ENCODE measurements at regions of chr12 and their contacts with region 1.

Region 1: DNA sequence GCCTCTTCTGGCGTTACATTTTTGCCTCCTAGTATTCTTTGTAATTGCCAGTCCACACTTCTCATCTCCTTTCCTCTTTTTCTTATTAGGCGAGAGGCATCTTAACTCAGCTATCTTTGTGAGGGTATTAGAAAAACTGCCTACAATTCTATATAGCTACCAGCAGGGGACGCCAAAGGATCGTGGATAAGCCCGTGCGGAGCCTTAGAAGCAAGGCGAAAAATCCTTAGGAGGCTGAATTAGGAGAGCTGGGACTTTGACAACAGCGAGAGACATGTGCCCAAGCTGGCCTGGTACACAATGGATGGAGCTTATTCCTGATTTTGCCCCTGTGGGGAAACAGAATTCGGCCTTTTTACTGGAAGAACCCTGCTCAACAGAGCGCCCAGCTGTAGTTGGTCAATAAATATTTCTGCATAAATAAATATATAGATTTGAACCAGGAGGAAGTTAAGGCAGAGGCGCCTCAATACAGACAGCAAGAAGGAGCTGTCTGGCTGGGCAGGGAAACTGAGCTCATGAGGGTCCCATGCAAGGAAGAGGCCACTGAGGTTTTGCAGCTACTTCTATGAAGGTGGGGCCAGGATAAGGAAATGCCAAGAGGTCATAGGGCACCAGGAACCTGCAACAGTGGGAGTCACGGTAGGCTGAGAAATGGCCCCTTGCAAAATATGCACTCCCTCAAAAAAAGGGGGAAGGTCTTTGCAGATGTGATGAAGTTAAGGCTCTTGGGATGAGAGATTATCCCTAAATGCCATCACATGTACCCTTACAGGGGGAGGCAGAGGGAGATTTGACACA is 14.6 kb upstream of the RBM19 start:
- DNase-seq: no peak
- ATAC-seq: no peak
- H3K4me3 Mint-ChIP-seq: no peak overlapping the region
- H3K27ac Mint-ChIP-seq: no peak overlapping the region
- H3K4me1 Mint-ChIP-seq: no peaks in the 10 kb centered on the region
- H3K27me3 Mint-ChIP-seq: peaks cover 3% of the 10 kb centered on the region

Region 2: DNA sequence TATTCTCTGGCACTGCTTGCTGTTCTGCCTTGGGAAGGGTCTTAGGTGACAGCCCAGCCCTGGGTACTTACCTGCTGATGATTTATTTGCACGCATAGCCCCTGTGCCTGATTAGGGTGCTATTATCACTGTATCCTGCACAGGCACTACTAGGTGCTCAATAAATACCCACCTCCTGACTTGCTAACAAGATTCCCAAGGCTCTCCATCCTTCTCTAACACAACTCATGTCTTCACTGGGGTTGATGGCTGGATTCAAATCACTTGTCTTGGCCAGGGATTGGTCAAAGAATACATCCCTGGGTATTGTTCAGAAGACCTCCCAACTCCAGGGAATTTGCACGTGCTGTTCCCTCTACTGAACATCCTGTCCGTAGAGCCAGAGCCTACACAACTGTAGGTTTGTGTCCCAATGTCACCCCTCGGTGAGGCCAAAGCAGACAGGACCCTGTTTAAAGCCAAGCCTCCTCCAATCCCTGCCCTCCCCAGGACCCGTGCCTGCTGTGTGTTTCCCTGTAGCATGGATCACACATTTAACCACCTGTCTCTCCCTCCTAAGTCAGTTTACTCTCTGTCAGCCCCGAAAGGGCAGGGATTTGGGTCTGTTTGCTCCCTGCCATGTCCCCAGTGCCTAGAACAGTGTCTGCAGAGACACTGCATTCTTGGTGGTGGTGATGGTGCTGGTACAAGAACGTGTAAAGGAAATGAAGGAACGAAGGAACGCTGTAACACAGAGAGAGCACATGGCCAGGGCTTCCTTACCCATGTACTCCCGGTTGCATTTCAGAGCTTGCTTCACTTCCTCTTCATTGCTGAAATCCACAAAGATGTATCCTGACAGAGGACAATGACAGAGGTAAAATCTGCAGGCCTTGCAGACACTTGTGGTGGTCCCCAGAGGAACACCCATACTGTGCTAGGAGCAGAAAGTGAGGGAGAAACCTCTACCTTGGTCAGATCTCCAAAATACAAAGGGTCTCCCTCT is 31.1 kb before region 1 on chr12:
- CTCF ChIA-PET with region 1: no interaction called
- DNase-seq: no peak
- ATAC-seq: no peak
- H3K4me3 Mint-ChIP-seq: no peak overlapping the region
- H3K27ac Mint-ChIP-seq: no peak overlapping the region
- H3K4me1 Mint-ChIP-seq: peaks cover 6% of the 10 kb centered on the region
- H3K27me3 Mint-ChIP-seq: no peaks in the 10 kb centered on the region

Region 3: GRCh38 chr12:113965951-113966797 is 14.6 kb before region 1 on chr12 and contains the start of gene RBM19:
- CTCF ChIA-PET with region 1: interaction called, 32 read pairs
- DNase-seq: peak; percentile 98
- ATAC-seq: peak; percentile 97
- H3K4me3 Mint-ChIP-seq: peak within 1 kb of the TSS; percentile 96
- H3K27ac Mint-ChIP-seq: peak within 1 kb of the TSS; percentile 97
- H3K4me1 Mint-ChIP-seq: peaks cover 50% of the 10 kb centered on the region
- H3K27me3 Mint-ChIP-seq: no peaks in the 10 kb centered on the region
- total RNA-seq, gene RBM19: 39.8 to 55.7 TPM

Region 4: DNA sequence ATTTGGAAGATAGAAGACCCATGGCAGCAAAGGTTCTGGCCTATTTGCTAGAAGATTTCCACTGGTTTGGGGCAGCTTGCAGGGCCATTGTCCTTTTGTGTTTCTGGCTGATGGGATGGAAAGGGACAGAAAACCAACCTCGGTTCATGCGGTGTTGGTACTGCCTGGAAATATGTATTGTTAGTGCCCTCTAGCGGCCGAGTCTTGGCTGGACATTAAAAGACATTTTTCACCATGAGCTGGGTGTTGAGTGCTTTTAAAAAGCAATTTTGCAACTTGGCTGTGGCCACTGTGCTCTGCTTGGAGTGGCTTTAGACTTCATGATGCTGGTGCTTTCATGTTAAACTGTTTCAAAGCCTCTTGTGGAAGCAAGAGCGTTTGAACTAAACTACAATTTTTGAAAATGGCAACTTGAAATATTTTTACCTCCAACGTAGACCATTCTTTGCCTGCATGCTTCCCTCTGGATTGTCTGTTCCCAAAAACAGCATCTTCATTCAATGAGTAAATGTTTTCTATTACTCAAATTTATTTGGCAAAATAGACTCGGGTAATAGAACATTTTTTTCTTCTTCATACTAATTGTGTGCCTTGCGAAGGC is 527.9 kb after region 1 on chr12:
- CTCF ChIA-PET with region 1: interaction called, 28 read pairs
- DNase-seq: peak; percentile 72
- ATAC-seq: no peak
- H3K4me3 Mint-ChIP-seq: no peak overlapping the region
- H3K27ac Mint-ChIP-seq: no peak overlapping the region
- H3K4me1 Mint-ChIP-seq: no peaks in the 10 kb centered on the region
- H3K27me3 Mint-ChIP-seq: peaks cover under 1% of the 10 kb centered on the region